CD8-positive, alpha-beta T cell (primary cell): ENCODE measurements at regions of chr9 and their contacts with region 1.

Region 1: GRCh38 chr9:34328987-34329832 is at the starts of genes KIF24 and NUDT2:
- DNase-seq: peak; percentile 86 to 100 (median 93)
- ATAC-seq: peak; percentile 91
- H3K4me3 ChIP-seq: peak within 1 kb of the TSS; percentile 95 to 96
- H3K4me3 Mint-ChIP-seq: peak within 1 kb of the TSS; percentile 90
- H3K27ac ChIP-seq: peak within 1 kb of the TSS; percentile 92 to 93
- H3K27ac Mint-ChIP-seq: peak within 1 kb of the TSS; percentile 92
- H3K4me1 ChIP-seq: no peaks in the 10 kb centered on the region
- H3K4me1 Mint-ChIP-seq: peaks cover 23% of the 10 kb centered on the region
- H3K27me3 ChIP-seq: no peaks in the 10 kb centered on the region
- H3K27me3 Mint-ChIP-seq: no peaks in the 10 kb centered on the region
- CTCF ChIP-seq: no peak
- total RNA-seq, gene KIF24: 0.08 to 0.14 TPM
- total RNA-seq, gene NUDT2: 9.7 to 10.2 TPM

Region 2: DNA sequence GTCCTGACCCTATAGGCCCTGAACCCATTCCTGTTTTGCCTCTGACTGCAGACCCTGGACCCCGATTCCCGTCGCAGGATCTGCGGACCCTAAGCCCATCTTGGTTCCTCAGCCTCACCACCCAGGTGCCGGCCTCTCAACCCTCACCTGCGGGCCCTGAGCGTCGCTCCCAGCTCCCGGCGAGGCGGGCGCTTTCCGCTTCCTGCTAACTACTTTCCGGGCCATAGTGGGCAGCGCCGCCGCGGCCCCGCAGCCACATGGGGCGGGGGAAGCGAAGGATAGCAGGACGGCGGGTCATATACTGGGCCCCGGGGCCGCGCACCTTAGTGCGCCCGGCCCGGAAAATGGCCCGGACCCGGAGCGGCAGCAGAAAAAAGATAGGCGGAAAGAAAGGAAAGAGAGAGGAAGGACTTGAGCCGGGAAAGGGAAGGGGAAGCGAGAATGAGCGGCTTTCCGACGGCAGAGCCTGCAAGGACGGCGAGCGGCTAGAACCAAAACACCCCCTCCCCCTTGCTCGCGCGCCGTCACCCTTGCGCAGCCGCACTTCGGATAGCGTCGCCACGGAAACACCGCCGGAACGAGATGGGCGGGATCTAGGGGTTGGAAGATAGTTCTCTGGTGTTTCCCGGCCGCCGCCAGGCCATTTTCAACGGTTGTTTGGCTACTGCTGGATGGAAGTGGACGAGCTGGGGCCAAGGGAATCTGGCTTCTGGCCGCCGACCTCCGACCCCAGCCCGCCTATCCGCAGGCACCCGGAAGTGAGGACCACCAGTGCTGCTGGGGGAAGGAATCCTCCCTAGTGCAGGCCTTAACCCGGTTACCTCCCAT is 202.8 kb before region 1 on chr9 and contains the start of gene DCAF12:
- CTCF ChIA-PET with region 1: no interaction called
- POLR2A ChIA-PET with region 1: no interaction called
- intact Hi-C with region 1: loop called in 1 of 2 experiments (anchors 2 kb)
- DNase-seq: peak; percentile 82 to 96 (median 90)
- ATAC-seq: peak; percentile 96
- H3K4me3 ChIP-seq: peak within 1 kb of the TSS; percentile 89 to 96
- H3K4me3 Mint-ChIP-seq: peak within 1 kb of the TSS; percentile 98
- H3K27ac ChIP-seq: peak within 1 kb of the TSS; percentile 79 to 92
- H3K27ac Mint-ChIP-seq: peak within 1 kb of the TSS; percentile 97
- H3K4me1 ChIP-seq: peaks cover 39% of the 10 kb centered on the region
- H3K4me1 Mint-ChIP-seq: peaks cover 49% of the 10 kb centered on the region
- H3K27me3 ChIP-seq: no peaks in the 10 kb centered on the region
- H3K27me3 Mint-ChIP-seq: no peaks in the 10 kb centered on the region
- CTCF ChIP-seq: no peak
- total RNA-seq, gene DCAF12: 4.0 to 4.1 TPM

Region 3: DNA sequence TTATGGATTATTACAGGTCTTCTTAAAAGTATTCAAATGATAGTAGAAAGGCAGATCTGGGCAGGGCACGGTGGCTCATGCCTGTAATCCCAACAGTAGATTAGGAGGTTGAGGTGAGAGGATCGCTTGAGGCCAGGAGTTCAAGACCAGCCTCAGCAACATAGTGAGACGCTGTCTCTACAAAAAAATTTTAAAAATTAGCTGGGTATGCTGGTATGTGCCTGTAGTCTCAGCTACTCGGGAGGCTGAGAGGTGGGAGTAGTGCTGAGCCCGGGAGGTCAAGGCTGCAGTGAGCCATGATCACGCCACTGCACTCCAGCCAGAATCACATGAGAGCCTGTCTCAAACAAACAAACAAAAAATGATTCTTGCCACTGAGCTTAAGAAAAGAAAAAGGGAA is 106.8 kb before region 1 on chr9:
- CTCF ChIA-PET with region 1: no interaction called
- POLR2A ChIA-PET with region 1: no interaction called
- intact Hi-C with region 1: no loop called
- DNase-seq: no peak
- ATAC-seq: no peak
- H3K4me3 ChIP-seq: no peak overlapping the region
- H3K4me3 Mint-ChIP-seq: no peak overlapping the region
- H3K27ac ChIP-seq: no peak overlapping the region
- H3K27ac Mint-ChIP-seq: no peak overlapping the region
- H3K4me1 ChIP-seq: peaks cover 3% of the 10 kb centered on the region
- H3K4me1 Mint-ChIP-seq: peaks cover 23% of the 10 kb centered on the region
- H3K27me3 ChIP-seq: no peaks in the 10 kb centered on the region
- H3K27me3 Mint-ChIP-seq: no peaks in the 10 kb centered on the region
- CTCF ChIP-seq: no peak

Region 4: DNA sequence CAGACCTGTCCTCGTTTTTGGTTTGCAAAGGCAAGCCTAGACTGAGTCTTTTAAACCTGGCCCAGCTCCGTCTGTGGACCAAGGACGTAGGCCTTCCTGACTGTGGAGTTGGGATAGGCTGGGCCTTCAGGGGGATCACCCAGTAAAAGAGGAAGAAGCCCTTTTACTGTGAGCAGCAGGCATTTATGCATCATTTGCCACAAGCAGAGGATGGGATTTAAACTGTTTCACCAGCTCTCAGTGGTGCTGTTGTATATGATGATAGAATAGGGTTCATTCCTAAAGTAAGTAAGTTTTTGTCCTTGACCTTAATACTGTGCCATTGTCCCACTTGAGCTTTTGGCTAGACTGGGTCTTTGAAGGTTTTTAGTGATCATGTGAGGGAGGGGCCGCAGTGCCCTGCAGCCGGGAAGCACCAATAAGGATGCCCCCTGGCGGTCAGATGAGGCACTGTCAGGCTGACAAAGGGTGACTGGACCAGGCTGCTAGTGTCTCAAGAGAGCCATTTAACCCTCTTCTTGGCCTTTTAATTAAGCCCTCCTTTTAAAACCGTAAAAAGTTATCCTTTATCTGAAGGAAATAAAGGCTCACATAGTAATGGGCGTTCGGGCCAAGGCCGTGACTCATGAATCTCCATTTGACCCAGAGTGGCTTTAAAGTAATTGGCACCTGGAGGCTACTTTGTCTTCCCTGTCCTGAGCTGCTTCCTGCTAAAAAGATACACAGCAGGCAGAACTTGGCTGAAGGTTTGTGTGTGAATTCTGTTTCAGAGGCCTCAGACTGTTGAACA is 76.3 kb before region 1 on chr9:
- CTCF ChIA-PET with region 1: interaction called, 11 read pairs
- POLR2A ChIA-PET with region 1: no interaction called
- intact Hi-C with region 1: no loop called
- DNase-seq: peak in 8 of 9 experiments; percentile 29 to 79 (median 66)
- ATAC-seq: peak; percentile 75
- H3K4me3 ChIP-seq: no peak overlapping the region
- H3K4me3 Mint-ChIP-seq: no peak overlapping the region
- H3K27ac ChIP-seq: no peak overlapping the region
- H3K27ac Mint-ChIP-seq: peak overlapping the region; percentile 52
- H3K4me1 ChIP-seq: peaks cover 23% of the 10 kb centered on the region
- H3K4me1 Mint-ChIP-seq: peaks cover 21% of the 10 kb centered on the region
- H3K27me3 ChIP-seq: no peaks in the 10 kb centered on the region
- H3K27me3 Mint-ChIP-seq: no peaks in the 10 kb centered on the region
- CTCF ChIP-seq: peak; percentile 92

Region 5: DNA sequence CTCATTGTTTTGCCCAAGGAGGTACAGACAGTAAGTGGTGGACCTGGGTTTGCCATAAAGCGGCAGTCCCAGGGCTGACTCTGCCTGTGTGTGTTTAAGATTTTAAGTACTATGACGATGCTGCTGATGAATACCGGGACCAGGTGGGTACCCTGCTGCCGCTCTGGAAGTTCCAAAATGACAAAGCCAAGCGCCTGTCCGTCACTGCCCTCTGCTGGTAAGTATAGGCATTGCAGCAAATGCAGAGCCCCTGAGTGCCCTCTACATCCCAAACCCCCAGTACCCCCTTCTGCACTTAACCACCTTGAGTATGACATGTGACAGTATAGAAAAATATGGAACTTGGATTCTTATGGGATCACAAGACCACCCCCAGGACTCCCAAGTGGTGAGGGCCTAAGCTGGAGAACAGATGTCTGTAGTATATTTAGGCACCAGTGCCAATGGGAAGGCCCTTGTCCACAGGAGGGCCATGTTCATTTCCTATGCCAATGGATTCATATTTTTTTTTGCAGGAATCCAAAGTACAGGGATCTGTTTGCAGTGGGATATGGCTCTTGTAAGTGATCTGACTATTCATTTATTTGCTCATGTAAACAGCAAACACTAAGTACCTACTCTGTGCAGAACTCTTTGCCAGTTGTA is 171.5 kb after region 1 on chr9:
- CTCF ChIA-PET with region 1: interaction called, 19 read pairs
- POLR2A ChIA-PET with region 1: no interaction called
- intact Hi-C with region 1: loop called in 1 of 2 experiments (anchors 2 kb)
- DNase-seq: peak; percentile 52 to 84 (median 73)
- ATAC-seq: peak; percentile 97
- H3K4me3 ChIP-seq: no peak overlapping the region
- H3K4me3 Mint-ChIP-seq: no peak overlapping the region
- H3K27ac ChIP-seq: no peak overlapping the region
- H3K27ac Mint-ChIP-seq: no peak overlapping the region
- H3K4me1 ChIP-seq: no peaks in the 10 kb centered on the region
- H3K4me1 Mint-ChIP-seq: no peaks in the 10 kb centered on the region
- H3K27me3 ChIP-seq: no peaks in the 10 kb centered on the region
- H3K27me3 Mint-ChIP-seq: peaks cover 10% of the 10 kb centered on the region
- CTCF ChIP-seq: peak; percentile 91

Region 6: GRCh38 chr9:34591248-34591916 is 262.2 kb after region 1 on chr9:
- CTCF ChIA-PET with region 1: interaction called, 8 read pairs
- POLR2A ChIA-PET with region 1: no interaction called
- intact Hi-C with region 1: loop called in 1 of 2 experiments (anchors 5 kb)
- DNase-seq: peak; percentile 59 to 86 (median 80)
- ATAC-seq: peak; percentile 83
- H3K4me3 ChIP-seq: peak overlapping the region; percentile 54 to 73
- H3K4me3 Mint-ChIP-seq: peak overlapping the region; percentile 78
- H3K27ac ChIP-seq: no peak overlapping the region
- H3K27ac Mint-ChIP-seq: no peak overlapping the region
- H3K4me1 ChIP-seq: peaks cover 9% of the 10 kb centered on the region
- H3K4me1 Mint-ChIP-seq: peaks cover 32% of the 10 kb centered on the region
- H3K27me3 ChIP-seq: peaks cover 26 to 47% of the 10 kb centered on the region in 2 experiments
- H3K27me3 Mint-ChIP-seq: peaks cover 70% of the 10 kb centered on the region
- CTCF ChIP-seq: peak; percentile 74

Region 7: GRCh38 chr9:34646211-34647083 is 317.2 kb after region 1 on chr9 and contains the start of gene GALT:
- CTCF ChIA-PET with region 1: no interaction called
- POLR2A ChIA-PET with region 1: no interaction called
- intact Hi-C with region 1: loop called in 1 of 2 experiments (anchors 5 kb)
- DNase-seq: peak; percentile 90 to 98 (median 97)
- ATAC-seq: peak; percentile 90
- H3K4me3 ChIP-seq: peak within 1 kb of the TSS; percentile 89 to 99
- H3K4me3 Mint-ChIP-seq: peak within 1 kb of the TSS; percentile 95
- H3K27ac ChIP-seq: peak within 1 kb of the TSS; percentile 69 to 80
- H3K27ac Mint-ChIP-seq: peak within 1 kb of the TSS; percentile 89
- H3K4me1 ChIP-seq: peaks cover 27% of the 10 kb centered on the region
- H3K4me1 Mint-ChIP-seq: peaks cover 31% of the 10 kb centered on the region
- H3K27me3 ChIP-seq: no peaks in the 10 kb centered on the region
- H3K27me3 Mint-ChIP-seq: no peaks in the 10 kb centered on the region
- CTCF ChIP-seq: peak; percentile 58
- total RNA-seq, gene GALT: 64.7 to 68.4 TPM